Activated CD8-positive, alpha-beta T cell treated with anti-CD3 and anti-CD28 coated beads, Interleukin-2, amount 10 ng/mL, durations not matched to agents 7 days and 5 days (primary cell): ENCODE measurements at regions of chr6 and their contacts with region 1.

Region 1: DNA sequence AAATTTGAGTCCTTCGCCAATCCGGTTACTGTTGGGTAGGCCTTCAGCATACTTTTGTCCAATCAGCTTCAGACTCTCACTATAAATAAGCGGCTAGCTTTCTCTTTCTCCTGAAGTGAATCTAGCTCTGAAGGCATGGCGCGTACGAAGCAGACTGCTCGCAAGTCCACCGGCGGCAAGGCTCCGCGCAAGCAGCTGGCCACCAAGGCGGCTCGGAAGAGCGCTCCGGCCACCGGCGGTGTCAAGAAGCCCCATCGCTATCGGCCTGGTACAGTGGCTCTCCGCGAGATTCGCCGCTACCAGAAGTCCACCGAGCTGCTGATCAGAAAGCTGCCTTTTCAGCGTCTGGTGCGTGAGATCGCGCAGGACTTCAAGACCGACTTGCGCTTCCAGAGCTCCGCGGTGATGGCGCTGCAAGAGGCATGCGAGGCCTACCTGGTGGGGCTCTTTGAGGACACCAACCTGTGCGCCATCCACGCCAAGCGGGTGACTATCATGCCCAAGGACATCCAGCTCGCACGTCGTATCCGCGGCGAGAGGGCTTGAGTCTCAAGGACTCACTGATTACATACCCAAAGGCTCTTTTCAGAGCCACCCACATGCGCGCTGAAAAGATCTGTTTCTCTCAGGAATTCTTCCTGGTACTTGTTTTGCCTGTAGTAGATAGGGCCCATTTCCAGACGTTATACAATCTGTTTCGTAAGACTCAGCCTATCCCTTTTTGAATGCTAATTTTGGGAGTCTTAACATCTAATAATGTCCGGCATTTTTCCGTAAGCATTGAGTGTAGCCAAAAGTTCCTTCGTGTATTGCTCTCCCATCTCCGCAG is 102.0 kb downstream of the OR2B2 start:
- DNase-seq: peak; percentile 89
- ATAC-seq: peak; percentile 32
- H3K4me3 Mint-ChIP-seq: peak overlapping the region; percentile 95
- H3K27ac Mint-ChIP-seq: peak overlapping the region; percentile 98
- H3K4me1 Mint-ChIP-seq: peaks cover 66% of the 10 kb centered on the region
- H3K27me3 Mint-ChIP-seq: peaks cover 2% of the 10 kb centered on the region

Region 2: DNA sequence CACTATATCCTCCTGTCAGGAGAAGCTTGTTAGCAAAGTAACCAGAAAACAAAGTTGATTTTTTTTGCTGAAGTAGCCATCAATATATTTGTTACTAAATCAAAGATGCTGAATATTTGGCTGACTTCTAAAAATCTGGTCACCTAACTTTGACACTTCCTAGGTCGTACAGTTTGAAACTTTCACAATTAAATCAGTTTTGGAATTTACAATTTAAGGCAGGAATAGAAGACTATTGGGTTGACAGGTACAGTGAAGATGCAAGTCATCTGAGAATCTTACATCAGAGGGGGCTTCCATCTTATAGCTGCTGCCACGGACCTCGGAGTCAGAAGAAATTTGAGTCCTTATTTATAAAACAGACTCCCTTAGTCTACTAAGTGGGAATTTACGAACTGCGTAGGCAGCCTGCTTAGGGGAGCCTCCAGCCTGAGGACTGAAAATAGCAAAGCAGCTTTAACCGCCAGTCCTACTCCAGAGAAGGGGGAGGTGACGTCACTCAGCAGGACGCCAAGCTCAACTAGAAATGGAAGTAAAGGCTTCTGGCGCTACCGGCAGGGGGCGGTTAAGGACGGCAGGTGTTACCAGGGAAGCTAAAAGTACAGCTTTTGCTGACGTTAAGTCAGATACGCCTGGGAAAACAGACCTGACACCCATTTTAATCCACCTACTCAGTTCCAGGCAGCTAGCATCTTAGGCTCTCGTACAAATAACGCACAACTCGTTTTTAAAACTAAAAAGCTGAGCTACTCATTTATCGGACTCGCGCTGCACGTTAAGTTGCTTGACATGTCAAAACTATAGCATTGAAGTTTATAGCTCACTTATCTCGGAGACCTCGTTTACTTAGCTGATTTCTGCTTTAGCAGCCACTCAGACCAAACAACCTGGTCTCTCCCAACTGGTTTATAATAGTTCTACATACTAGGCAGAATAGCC is 1784.0 kb before region 1 on chr6:
- CTCF ChIA-PET with region 1: no interaction called
- POLR2A ChIA-PET with region 1: interaction called, 143 read pairs
- DNase-seq: peak; percentile 97
- ATAC-seq: peak; percentile 42
- H3K4me3 Mint-ChIP-seq: peak overlapping the region; percentile 86
- H3K27ac Mint-ChIP-seq: peak overlapping the region; percentile 99
- H3K4me1 Mint-ChIP-seq: peaks cover 86% of the 10 kb centered on the region
- H3K27me3 Mint-ChIP-seq: peaks cover 3% of the 10 kb centered on the region

Region 3: DNA sequence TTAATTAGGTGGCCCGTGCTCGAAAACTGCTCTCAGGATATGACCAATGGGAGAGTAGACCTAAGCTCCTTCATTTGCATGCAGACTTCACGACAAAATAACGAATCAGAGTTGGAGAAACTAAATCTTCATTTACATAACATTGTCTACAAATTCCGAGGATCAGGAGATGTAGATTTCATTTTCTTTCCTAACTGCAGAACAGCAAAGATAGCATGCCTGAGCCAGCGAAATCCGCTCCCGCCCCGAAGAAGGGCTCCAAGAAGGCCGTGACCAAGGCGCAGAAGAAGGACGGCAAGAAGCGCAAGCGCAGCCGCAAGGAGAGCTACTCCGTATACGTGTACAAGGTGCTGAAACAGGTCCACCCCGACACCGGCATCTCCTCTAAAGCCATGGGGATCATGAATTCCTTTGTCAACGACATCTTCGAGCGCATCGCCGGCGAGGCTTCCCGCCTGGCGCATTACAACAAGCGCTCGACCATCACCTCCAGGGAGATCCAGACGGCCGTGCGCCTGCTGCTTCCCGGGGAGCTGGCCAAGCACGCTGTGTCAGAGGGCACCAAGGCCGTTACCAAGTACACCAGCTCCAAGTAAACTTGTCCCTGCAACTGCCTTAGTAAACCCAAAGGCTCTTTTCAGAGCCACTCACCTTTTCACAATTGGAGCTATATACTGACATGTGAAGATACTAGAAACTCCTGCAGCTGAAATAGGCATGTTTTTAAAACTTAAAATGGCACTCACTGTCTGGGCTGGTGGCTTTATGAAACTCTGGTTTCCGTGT is 1626.4 kb before region 1 on chr6:
- CTCF ChIA-PET with region 1: no interaction called
- POLR2A ChIA-PET with region 1: interaction called, 20 read pairs
- DNase-seq: peak; percentile 80
- ATAC-seq: peak; percentile 80
- H3K4me3 Mint-ChIP-seq: peak overlapping the region; percentile 83
- H3K27ac Mint-ChIP-seq: peak overlapping the region; percentile 97
- H3K4me1 Mint-ChIP-seq: peaks cover 79% of the 10 kb centered on the region
- H3K27me3 Mint-ChIP-seq: no peaks in the 10 kb centered on the region

Region 4: DNA sequence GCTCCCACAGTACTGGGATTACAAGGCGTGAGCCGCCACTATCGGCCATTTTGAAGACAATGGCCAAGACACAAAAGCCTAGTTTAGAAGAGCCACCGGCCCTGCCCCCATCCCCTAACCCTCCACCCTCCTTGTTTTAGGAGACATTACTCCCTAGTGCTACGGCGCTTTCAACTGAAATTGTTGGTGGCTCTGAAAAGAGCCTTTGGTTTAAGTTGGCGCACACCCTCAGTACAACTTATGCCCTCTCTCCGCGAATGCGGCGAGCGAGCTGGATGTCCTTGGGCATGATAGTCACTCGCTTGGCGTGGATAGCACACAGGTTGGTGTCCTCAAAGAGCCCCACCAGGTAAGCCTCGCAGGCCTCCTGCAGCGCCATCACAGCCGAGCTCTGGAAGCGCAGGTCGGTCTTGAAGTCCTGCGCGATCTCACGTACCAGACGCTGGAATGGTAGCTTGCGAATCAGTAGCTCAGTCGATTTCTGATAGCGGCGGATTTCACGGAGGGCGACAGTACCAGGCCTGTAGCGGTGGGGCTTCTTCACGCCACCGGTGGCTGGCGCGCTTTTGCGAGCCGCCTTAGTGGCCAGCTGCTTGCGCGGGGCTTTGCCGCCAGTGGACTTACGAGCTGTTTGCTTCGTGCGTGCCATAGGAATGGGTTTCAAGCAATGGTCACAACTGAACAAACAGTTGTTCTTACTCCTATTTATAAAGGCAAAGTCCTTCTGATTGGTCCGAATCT is 1560.0 kb before region 1 on chr6:
- CTCF ChIA-PET with region 1: no interaction called
- POLR2A ChIA-PET with region 1: interaction called, 17 read pairs
- DNase-seq: peak; percentile 85
- ATAC-seq: peak; percentile 55
- H3K4me3 Mint-ChIP-seq: peak overlapping the region; percentile 84
- H3K27ac Mint-ChIP-seq: peak overlapping the region; percentile 100
- H3K4me1 Mint-ChIP-seq: peaks cover 30% of the 10 kb centered on the region
- H3K27me3 Mint-ChIP-seq: no peaks in the 10 kb centered on the region

Region 5: GRCh38 chr6:27146706-27147505 is 663.2 kb before region 1 on chr6:
- CTCF ChIA-PET with region 1: interaction called, 4 read pairs
- POLR2A ChIA-PET with region 1: interaction called, 545 read pairs
- DNase-seq: peak; percentile 91
- ATAC-seq: peak; percentile 64
- H3K4me3 Mint-ChIP-seq: no peak overlapping the region
- H3K27ac Mint-ChIP-seq: no peak overlapping the region
- H3K4me1 Mint-ChIP-seq: peaks cover 35% of the 10 kb centered on the region
- H3K27me3 Mint-ChIP-seq: no peaks in the 10 kb centered on the region

Region 6: DNA sequence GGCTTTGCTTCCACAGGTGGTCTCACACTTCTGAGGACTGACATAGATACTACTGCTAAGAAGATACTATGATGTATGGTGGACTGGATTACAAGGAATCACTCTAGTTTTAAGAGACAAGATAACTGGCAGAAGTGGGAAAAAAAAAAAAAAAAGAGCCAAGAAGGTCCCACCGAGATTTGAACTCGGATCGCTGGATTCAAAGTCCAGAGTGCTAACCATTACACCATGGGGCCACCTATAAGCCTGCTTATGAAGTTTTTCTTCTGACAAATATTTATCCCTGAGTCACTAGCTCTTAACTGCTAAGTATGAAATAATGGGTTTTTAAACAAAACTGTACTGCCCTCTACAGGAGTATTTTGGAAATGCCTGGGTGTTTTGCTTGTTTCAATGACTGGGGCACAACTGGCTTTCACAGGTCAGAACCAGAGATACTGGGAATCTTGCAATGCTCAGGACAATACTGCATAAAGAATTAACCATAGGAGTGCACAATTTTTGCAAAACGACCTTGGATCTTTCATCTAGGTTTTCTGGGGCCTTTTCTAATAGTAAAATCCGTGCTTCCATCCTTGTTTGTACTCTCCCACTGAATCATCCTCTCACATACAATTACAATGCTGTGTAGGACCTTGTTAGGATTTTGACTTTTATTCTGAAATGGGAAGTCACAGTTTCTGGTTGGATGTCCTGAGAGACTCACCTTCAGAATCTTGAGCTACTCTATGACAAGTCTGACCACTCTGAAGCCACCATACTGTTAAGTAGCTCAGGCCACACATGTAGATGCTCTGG is 14.3 kb before region 1 on chr6:
- CTCF ChIA-PET with region 1: interaction called, 64 read pairs
- POLR2A ChIA-PET with region 1: interaction called, 75 read pairs
- DNase-seq: peak; percentile 83
- ATAC-seq: peak; percentile 52
- H3K4me3 Mint-ChIP-seq: peak overlapping the region; percentile 1
- H3K27ac Mint-ChIP-seq: no peak overlapping the region
- H3K4me1 Mint-ChIP-seq: peaks cover 49% of the 10 kb centered on the region
- H3K27me3 Mint-ChIP-seq: peaks cover 13% of the 10 kb centered on the region